ENCODE measurements at regions of chr1 and their contacts with region 1.

Region 1: DNA sequence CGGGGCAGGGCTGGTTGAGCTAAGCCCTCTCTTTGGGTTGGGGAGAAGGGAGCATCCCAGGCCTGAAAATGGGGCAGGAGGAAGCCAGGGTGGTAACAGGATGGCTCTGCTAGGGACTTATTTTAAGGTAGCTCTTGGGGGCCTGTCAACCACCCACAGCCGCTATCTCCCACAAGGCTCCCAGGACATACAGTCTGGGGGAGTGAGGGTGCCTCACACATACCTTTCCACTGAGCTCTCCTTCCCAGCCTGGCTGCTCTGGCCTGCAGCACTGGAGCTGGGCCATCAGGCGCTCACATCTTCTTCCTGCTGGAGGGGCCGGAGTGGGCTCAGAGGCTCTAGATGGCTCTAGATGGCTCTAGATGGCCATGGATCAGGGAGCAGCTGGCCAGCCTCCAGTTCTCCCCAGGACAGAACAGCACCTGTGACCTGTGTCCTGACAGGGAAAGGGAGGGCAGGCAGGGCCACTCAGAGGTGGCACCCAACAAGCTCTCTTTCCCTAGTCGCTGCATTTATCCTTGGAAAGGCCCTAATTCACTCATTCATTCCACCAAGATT is 11.0 kb upstream of the NPPB start:
- DNase-seq: no peak
- H3K4me3 ChIP-seq: no peak overlapping the region
- H3K27ac ChIP-seq: no peak overlapping the region
- H3K4me1 ChIP-seq: no peaks in the 10 kb centered on the region
- H3K27me3 ChIP-seq: peaks cover 66% of the 10 kb centered on the region
- CTCF ChIP-seq: no peak

Region 2: GRCh38 chr1:11847667-11848372 is 21.9 kb before region 1 on chr1 and contains the start of gene NPPA:
- CTCF ChIA-PET with region 1: interaction called, 10 read pairs
- POLR2A ChIA-PET with region 1: no interaction called
- intact Hi-C with region 1: no loop called
- DNase-seq: no peak
- H3K4me3 ChIP-seq: no peak within 1 kb of the TSS
- H3K27ac ChIP-seq: no peak within 1 kb of the TSS
- H3K4me1 ChIP-seq: no peaks in the 10 kb centered on the region
- H3K27me3 ChIP-seq: no peaks in the 10 kb centered on the region
- CTCF ChIP-seq: no peak
- total RNA-seq, gene NPPA: not detected in 2 replicates

Measured in A673 (cell line).